Heart right ventricle (tissue), 16 donors: ENCODE measurements at regions of chr17 and their contacts with region 1.

Region 1: GRCh38 chr17:64129764-64130558 is at the start of gene ERN1:
- DNase-seq: peak; percentile 92 to 96
- ATAC-seq: peak; percentile 96 to 99 (median 98)
- H3K4me3 ChIP-seq: peak within 1 kb of the TSS; percentile 62 to 87 (median 80)
- H3K27ac ChIP-seq: peak within 1 kb of the TSS; percentile 82 to 98 (median 96)
- H3K4me1 ChIP-seq: peaks cover 0 to 47% (median 32%) of the 10 kb centered on the region in 9 donors
- H3K27me3 ChIP-seq: no peaks in the 10 kb centered on the region
- CTCF ChIP-seq: peak in 1 of 9 donors; percentile 17
- total RNA-seq, gene ERN1: 5.0 to 16.6 (median 7.6) TPM

Region 2: DNA sequence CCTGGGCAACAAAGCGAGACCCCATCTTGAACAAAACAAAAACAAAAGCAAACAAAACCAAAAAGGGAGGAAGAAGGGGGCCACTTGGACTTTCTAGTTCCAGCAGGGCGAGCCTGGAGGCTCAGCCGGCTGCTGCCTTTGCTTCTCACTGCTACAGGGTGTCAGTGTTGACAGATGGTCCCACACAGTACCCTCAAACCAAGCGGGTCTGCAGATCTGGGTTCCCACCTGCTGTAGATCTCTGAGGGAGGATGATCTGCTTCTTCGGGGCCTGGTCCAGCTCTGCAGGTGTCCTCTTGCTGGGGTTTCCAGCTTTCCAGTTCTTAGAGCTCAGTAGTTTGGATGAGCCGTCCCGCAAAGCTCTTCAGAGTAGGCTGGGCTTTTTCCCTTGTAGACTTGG is 225.6 kb before region 1 on chr17:
- intact Hi-C with region 1: loop called in 1 of 10 experiments (anchors 5 kb)
- DNase-seq: no peak
- ATAC-seq: no peak
- H3K4me3 ChIP-seq: no peak overlapping the region
- H3K27ac ChIP-seq: no peak overlapping the region
- H3K4me1 ChIP-seq: no peaks in the 10 kb centered on the region
- H3K27me3 ChIP-seq: peaks cover 0 to 2% (median 0%) of the 10 kb centered on the region in 7 donors
- CTCF ChIP-seq: no peak

Region 3: DNA sequence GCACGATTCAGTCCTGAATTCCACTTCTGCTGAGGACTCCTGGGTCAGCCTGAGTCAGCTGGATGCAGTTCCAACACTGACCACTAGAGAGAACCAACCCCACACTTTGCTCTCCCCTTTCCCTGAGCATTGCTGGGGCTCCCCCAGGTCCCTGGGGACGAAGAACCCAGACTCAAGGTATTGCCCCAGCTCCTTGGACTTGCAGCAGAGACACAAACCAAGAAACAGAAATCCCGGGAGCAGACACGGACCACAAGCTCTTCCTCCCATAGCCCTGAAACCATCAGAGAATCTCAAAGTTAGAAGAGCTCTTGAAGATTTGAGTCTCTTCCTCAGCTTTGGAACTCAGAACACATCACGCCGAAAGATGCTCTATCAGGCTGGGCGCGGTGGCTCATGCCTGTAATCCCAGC is 210.6 kb before region 1 on chr17:
- intact Hi-C with region 1: loop called in 8 of 10 experiments (anchors 5 to 10 kb)
- DNase-seq: peak in 1 of 2 donors; percentile 51
- ATAC-seq: peak; percentile 81 to 91 (median 87)
- H3K4me3 ChIP-seq: no peak overlapping the region
- H3K27ac ChIP-seq: no peak overlapping the region
- H3K4me1 ChIP-seq: peaks cover 0 to 10% (median 0%) of the 10 kb centered on the region in 9 donors
- H3K27me3 ChIP-seq: peaks cover 0 to 6% (median 0%) of the 10 kb centered on the region in 7 donors
- CTCF ChIP-seq: peak; percentile 88 to 97 (median 92)

Region 4: GRCh38 chr17:64063766-64064224 is 66.2 kb before region 1 on chr17:
- intact Hi-C with region 1: loop called in 5 of 10 experiments (anchors 5 to 10 kb)
- DNase-seq: peak; percentile 43 to 62
- ATAC-seq: peak; percentile 47 to 84 (median 74)
- H3K4me3 ChIP-seq: no peak overlapping the region
- H3K27ac ChIP-seq: peak overlapping the region in 1 of 10 donors; percentile 74
- H3K4me1 ChIP-seq: peaks cover 0 to 45% (median 0%) of the 10 kb centered on the region in 9 donors
- H3K27me3 ChIP-seq: no peaks in the 10 kb centered on the region
- CTCF ChIP-seq: peak; percentile 29 to 69 (median 54)

Region 5: GRCh38 chr17:64183815-64184214 is 53.9 kb after region 1 on chr17:
- intact Hi-C with region 1: no loop called
- DNase-seq: no peak
- ATAC-seq: no peak
- H3K4me3 ChIP-seq: no peak overlapping the region
- H3K27ac ChIP-seq: no peak overlapping the region
- H3K4me1 ChIP-seq: peaks cover 0 to 59% (median 13%) of the 10 kb centered on the region in 9 donors
- H3K27me3 ChIP-seq: no peaks in the 10 kb centered on the region
- CTCF ChIP-seq: no peak

Region 6: GRCh38 chr17:64281962-64282727 is 152.2 kb after region 1 on chr17:
- intact Hi-C with region 1: loop called in 1 of 10 experiments (anchors 5 kb)
- DNase-seq: peak; percentile 26 to 56
- ATAC-seq: peak; percentile 19 to 57 (median 42)
- H3K4me3 ChIP-seq: peak overlapping the region in 3 of 10 donors; percentile 0 to 1 (median 1)
- H3K27ac ChIP-seq: peak overlapping the region in 1 of 10 donors; percentile 22
- H3K4me1 ChIP-seq: peaks cover 3 to 39% (median 28%) of the 10 kb centered on the region in 9 donors
- H3K27me3 ChIP-seq: no peaks in the 10 kb centered on the region
- CTCF ChIP-seq: peak; percentile 75 to 89 (median 82)